HEK293 (cell line): ENCODE measurements at regions of chr17 and their contacts with region 1.

Region 1: GRCh38 chr17:68777243-68777855 is 176.2 kb upstream of the FAM20A start:
- H3K4me3 ChIP-seq: no peak overlapping the region
- H3K27ac ChIP-seq: no peak overlapping the region
- H3K4me1 ChIP-seq: no peaks in the 10 kb centered on the region
- CTCF ChIP-seq: peak; percentile 55

Region 2: DNA sequence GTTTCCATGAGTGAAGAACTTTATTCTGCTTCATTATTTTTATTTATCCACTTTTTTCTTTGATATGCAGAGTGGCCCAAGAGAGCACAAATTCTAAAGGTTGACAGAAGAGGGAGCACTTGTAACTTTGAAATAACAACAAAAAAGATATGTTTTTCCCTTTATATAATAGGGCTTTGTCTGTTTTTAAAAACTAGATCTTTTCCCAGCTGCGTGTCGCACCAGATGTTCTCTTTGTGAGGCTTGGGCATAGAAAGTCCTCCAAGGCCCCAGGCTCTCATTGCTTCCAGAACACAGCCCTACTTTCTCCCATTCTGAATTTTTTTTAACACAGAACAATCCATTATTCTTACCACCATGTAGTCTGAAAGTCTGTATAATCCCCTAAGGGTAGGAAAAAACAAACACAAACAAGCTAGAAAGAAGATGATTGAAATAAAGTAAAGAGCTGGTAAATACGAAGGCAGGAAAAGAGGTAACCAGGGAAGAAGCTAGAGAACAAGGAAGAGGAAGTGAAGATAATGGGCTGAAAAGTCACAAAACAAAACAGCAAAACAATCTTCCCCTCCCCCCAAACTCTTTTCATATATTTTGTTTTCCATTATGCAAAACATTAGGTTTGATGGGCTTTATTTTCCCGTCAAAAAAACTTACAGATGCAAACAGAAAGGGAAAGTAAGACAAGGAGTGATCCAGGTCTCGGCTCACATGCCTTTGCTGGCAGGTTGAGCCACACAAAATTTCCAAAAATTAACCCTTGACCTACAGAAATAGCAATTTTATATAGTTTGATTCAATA is 17.5 kb after region 1 on chr17:
- CTCF ChIA-PET with region 1: interaction called, 12 read pairs
- POLR2A ChIA-PET with region 1: no interaction called
- H3K4me3 ChIP-seq: no peak overlapping the region
- H3K27ac ChIP-seq: no peak overlapping the region
- H3K4me1 ChIP-seq: no peaks in the 10 kb centered on the region
- CTCF ChIP-seq: 0 out of 2 replicates have a peak, but pooled peaks have one; percentile 11

Region 3: GRCh38 chr17:68910789-68911431 is 133.6 kb after region 1 on chr17:
- CTCF ChIA-PET with region 1: interaction called, 17 read pairs
- POLR2A ChIA-PET with region 1: no interaction called
- H3K4me3 ChIP-seq: no peak overlapping the region
- H3K27ac ChIP-seq: no peak overlapping the region
- H3K4me1 ChIP-seq: no peaks in the 10 kb centered on the region
- CTCF ChIP-seq: no peak

Region 4: GRCh38 chr17:69235338-69235930 is 458.1 kb after region 1 on chr17:
- CTCF ChIA-PET with region 1: interaction called, 58 read pairs
- POLR2A ChIA-PET with region 1: no interaction called
- H3K4me3 ChIP-seq: no peak overlapping the region
- H3K27ac ChIP-seq: no peak overlapping the region
- H3K4me1 ChIP-seq: no peaks in the 10 kb centered on the region
- CTCF ChIP-seq: peak; percentile 87

Region 5: GRCh38 chr17:69246726-69247375 is 469.5 kb after region 1 on chr17:
- CTCF ChIA-PET with region 1: interaction called, 72 read pairs
- POLR2A ChIA-PET with region 1: no interaction called
- H3K4me3 ChIP-seq: no peak overlapping the region
- H3K27ac ChIP-seq: no peak overlapping the region
- H3K4me1 ChIP-seq: no peaks in the 10 kb centered on the region
- CTCF ChIP-seq: no peak